ENCODE measurements at regions of chr17 and their contacts with region 1.

Region 1: GRCh38 chr17:80791758-80792284 is 199.8 kb upstream of the CHMP6 start:
- DNase-seq: no peak
- ATAC-seq: no peak
- H3K4me3 ChIP-seq: no peak overlapping the region
- H3K27ac ChIP-seq: peak overlapping the region; percentile 51
- H3K4me1 ChIP-seq: peaks cover 39% of the 10 kb centered on the region
- H3K27me3 ChIP-seq: no peaks in the 10 kb centered on the region
- CTCF ChIP-seq: no peak
- EP300 ChIP-seq: no peak
- POLR2A ChIP-seq: no peak
- RAD21 ChIP-seq: no peak

Region 2: DNA sequence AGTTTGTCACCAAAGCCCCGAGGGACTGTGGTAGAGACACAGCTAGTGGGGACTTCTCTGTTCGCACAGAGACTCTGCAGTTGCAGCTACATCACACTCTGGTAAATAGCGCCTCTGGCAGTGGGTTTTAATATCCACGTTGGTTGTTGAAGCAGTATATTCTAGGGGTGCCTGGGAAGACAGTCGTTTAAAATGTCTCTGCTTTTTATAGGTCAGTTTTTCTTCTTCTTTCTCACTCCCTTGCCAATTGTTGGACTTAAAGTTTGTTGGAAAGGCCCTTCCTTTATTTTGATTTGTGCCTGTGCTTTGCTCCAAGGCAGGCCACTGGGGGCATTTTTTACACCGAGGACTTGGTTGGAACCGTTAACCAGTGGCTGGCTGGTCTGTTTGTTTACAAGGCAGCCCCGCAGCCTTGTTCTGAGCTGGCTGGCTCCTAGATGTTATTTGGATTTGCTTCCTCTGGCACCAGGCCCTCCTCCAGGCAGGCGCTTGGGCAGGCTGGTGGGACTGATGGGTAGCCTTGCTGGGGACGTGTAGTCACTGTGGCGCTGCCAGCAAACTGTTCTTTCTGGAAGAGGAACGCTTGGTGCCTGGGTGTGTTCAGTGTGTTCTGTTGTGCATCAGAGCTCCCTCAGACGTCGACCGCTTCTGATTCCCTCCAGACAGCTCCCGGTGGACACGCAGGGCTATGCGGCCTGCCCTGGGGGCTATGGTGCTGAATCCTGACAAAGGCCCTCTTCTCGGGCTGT is 18.4 kb before region 1 on chr17:
- CTCF ChIA-PET with region 1: interaction called, 10 read pairs
- POLR2A ChIA-PET with region 1: interaction called, 5 read pairs
- RAD21 ChIA-PET with region 1: interaction called, 3 read pairs
- SMC1A ChIA-PET with region 1: interaction called, 5 read pairs
- in situ Hi-C with region 1: no loop called
- intact Hi-C with region 1: no loop called
- DNase-seq: no peak
- ATAC-seq: peak; percentile 19; the same call in 1 of the 3 replicates
- H3K4me3 ChIP-seq: no peak overlapping the region
- H3K27ac ChIP-seq: no peak overlapping the region
- H3K4me1 ChIP-seq: peaks cover 26% of the 10 kb centered on the region
- H3K27me3 ChIP-seq: no peaks in the 10 kb centered on the region
- CTCF ChIP-seq: peak in 2 of 3 experiments; percentile 7 to 20; a peak in 1 of 6 replicates
- EP300 ChIP-seq: no peak
- POLR2A ChIP-seq: no peak
- RAD21 ChIP-seq: peak; percentile 19; the same call in 1 of the 2 replicates

Region 3: GRCh38 chr17:80780381-80781198 is 11.2 kb before region 1 on chr17:
- CTCF ChIA-PET with region 1: interaction called, 13 read pairs
- POLR2A ChIA-PET with region 1: interaction called, 3 read pairs
- RAD21 ChIA-PET with region 1: interaction called, 12 read pairs
- SMC1A ChIA-PET with region 1: interaction called, 10 read pairs
- in situ Hi-C with region 1: no loop called
- intact Hi-C with region 1: no loop called
- DNase-seq: peak; percentile 61
- ATAC-seq: peak; percentile 93
- H3K4me3 ChIP-seq: peak overlapping the region; percentile 45; the same call in 1 of the 2 replicates
- H3K27ac ChIP-seq: peak overlapping the region; percentile 70
- H3K4me1 ChIP-seq: peaks cover 31% of the 10 kb centered on the region
- H3K27me3 ChIP-seq: no peaks in the 10 kb centered on the region
- CTCF ChIP-seq: no peak
- EP300 ChIP-seq: peak in 1 of 2 experiments; percentile 57; a peak in 1 of 4 replicates
- POLR2A ChIP-seq: no peak
- RAD21 ChIP-seq: no peak

Region 4: DNA sequence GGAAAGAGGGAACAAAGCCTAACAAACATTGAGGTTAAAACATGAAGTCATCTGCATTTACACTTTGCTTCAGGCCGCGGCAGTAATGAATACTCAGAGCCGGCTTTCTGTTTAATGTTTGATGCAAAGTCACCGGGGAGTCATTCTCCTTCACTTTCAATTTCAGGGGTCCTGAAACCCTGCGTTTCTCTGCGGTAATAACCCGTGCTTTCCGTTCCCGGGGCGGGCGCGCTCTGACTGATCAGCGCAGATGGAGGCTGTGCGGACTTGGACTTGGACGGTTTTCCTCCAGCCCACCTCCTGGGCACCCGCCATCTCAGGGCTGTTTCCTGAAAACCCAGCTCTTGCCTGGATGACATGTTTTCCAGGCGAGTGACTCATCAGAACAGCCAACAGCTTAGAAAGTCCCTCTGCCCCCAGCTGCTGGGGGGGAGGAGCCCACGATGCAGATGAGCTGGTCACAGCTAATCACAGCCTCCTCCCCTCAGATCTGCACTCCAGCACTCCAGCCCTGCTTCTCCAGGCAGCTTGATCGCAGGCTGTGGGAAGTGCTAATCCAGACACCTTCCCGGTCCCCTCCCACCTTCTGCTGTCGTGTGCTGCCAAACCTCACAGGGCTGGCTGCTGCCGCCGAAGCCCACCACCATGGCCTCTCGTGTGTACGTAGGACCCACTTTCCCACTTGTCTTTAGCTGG is 41.2 kb after region 1 on chr17:
- CTCF ChIA-PET with region 1: interaction called, 4 read pairs
- POLR2A ChIA-PET with region 1: interaction called, 4 read pairs
- RAD21 ChIA-PET with region 1: interaction called, 15 read pairs
- SMC1A ChIA-PET with region 1: interaction called, 16 read pairs
- in situ Hi-C with region 1: no loop called
- intact Hi-C with region 1: loop called (anchors 5 kb)
- DNase-seq: peak; percentile 73
- ATAC-seq: peak; percentile 96
- H3K4me3 ChIP-seq: peak overlapping the region; percentile 65; the same call in 1 of the 2 replicates
- H3K27ac ChIP-seq: peak overlapping the region; percentile 95
- H3K4me1 ChIP-seq: peaks cover 16% of the 10 kb centered on the region
- H3K27me3 ChIP-seq: no peaks in the 10 kb centered on the region
- CTCF ChIP-seq: no peak; a peak in 1 of 6 replicates
- EP300 ChIP-seq: peak in 1 of 2 experiments; percentile 76; a peak in 3 of 4 replicates
- POLR2A ChIP-seq: peak; percentile 79
- RAD21 ChIP-seq: no peak

Region 5: DNA sequence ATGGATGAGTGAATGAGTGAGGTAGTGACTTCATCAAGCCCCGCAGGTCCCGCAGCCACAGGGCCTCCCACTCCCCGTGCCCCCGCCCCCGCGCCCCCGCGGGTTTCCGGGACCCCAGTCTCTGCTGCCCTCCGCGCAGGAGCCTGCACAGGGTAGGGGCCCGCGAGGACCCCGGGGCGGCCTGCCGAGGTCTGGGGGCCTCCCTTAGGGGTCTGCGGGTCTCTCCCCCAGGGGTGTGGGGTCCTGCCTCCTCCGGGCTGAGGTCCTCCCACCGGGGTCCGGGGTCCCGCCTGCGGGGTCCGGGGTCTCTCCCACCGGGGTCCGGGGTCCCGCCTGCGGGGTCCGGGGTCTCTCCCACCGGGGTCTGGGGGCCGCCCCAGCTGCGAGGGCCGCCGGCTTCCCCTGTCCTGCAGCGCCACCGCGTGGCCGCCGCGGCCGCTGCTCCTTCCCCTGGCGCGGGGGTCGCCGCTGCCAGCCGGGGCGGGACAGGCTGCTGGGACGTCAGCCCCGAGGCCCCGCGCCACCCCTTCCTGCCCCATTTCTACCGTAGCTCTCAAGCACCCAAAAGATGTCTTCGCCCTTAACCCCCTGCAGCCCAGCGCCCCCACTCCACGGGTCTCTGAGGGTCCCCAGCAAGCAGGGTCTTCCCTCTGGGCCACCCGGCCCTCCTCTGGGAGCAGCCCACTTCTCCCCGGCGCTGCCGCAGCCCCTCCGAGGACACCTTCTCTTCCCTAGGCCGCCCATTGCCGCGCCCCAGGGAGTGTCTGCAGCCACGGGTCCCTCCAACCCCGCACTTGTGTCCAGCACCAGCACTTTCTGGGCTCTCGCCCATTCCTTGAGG is 189.5 kb after region 1 on chr17:
- CTCF ChIA-PET with region 1: no interaction called
- POLR2A ChIA-PET with region 1: no interaction called
- RAD21 ChIA-PET with region 1: no interaction called
- SMC1A ChIA-PET with region 1: no interaction called
- in situ Hi-C with region 1: no loop called
- intact Hi-C with region 1: no loop called
- DNase-seq: no peak
- ATAC-seq: peak; percentile 90
- H3K4me3 ChIP-seq: no peak overlapping the region
- H3K27ac ChIP-seq: no peak overlapping the region
- H3K4me1 ChIP-seq: no peaks in the 10 kb centered on the region
- H3K27me3 ChIP-seq: peaks cover 0 to 3% of the 10 kb centered on the region in 2 experiments; a peak in 1 of 4 replicates
- CTCF ChIP-seq: peak; percentile 49 to 60 (median 55); a peak in 5 of 6 replicates
- EP300 ChIP-seq: no peak
- POLR2A ChIP-seq: no peak
- RAD21 ChIP-seq: peak; percentile 72

Measured in GM12878 (cell line).